ENCODE measurements at regions of chr18 and their contacts with region 1.

Region 1: GRCh38 chr18:3451183-3451988 is 1.4 kb downstream of the TGIF1 start:
- DNase-seq: peak; percentile 93 to 95
- ATAC-seq: peak; percentile 40

Region 2: GRCh38 chr18:2480575-2480974 is 970.8 kb before region 1 on chr18:
- intact Hi-C with region 1: no loop called
- DNase-seq: no peak
- ATAC-seq: no peak

Region 3: GRCh38 chr18:3508576-3509549 is 57.5 kb after region 1 on chr18:
- intact Hi-C with region 1: no loop called
- DNase-seq: no peak
- ATAC-seq: no peak

Region 4: DNA sequence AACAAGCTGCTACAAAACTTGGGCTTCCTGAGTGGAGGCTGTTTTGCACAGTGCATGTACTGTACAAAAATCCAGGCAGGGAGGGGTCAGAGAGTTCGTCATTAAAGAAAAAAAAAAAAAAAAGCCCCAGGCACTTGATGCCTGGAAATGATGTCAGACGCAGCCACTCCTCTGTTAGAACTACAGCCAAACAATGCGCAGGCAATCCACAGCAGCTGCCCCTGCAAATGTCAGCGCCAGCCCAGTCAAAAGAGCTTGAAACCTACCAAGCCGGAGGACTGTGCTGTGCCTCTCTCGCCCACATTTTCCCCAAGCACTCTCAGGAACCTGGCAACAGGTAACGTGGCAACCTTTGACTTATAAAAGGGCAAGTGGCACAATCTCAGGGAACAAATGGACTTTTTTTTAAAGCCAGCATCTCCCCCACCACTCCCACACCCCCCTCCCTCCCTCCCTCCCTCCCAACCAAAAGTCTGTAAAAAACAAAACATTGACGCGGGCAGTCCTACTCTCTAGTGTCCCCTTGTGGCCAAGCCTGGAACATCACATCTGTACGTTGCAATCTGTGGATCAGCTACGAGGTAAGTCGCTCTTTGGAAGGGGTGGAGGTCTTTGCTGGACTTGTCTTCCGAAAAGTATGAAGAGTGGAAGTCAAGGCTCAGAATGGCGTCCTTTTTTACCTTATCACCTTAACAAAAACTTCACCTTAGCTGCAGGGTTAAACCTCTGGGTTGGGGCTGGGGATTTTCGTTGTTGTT is 142.7 kb after region 1 on chr18:
- intact Hi-C with region 1: loop called (anchors 5 to 10 kb)
- DNase-seq: peak; percentile 89 to 92
- ATAC-seq: peak; percentile 66

Region 5: GRCh38 chr18:3665780-3666525 is 214.6 kb after region 1 on chr18:
- intact Hi-C with region 1: loop called in 1 of 2 experiments (anchors 10 kb)
- DNase-seq: peak; percentile 74 to 81
- ATAC-seq: peak; percentile 85

Measured in left colon (tissue), 2 donors.